B cell (primary cell): ENCODE measurements at regions of chr10 and their contacts with region 1.

Region 1: DNA sequence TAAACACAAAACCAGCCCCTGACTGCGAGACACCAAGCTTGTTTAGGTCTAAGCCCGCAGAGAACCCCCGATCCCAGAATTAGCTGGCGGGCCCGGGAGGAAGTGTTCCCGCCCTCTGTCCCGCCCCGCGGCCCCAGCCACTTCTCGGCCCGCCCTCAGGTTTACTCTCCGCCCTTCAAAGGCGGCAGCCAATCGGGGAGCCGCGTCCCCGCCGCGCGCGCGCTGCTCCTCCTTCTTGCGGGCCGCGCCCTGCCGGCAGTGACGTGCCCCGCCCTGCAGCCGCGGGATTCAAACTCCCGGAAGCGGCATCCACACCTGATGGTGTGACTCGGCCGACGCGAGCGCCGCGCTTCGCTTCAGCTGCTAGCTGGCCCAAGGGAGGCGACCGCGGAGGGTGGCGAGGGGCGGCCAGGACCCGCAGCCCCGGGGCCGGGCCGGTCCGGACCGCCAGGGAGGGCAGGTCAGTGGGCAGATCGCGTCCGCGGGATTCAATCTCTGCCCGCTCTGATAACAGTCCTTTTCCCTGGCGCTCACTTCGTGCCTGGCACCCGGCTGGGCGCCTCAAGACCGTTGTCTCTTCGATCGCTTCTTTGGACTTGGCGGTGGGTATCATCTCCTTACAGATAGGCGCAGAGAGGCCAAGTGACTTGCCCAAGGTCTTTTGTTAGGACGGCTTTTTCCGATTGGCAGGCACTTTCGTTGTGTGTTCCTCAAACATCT is at the start of gene CEP55:
- DNase-seq: peak; percentile 94
- ATAC-seq: peak; percentile 99
- H3K4me3 ChIP-seq: peak within 1 kb of the TSS; percentile 67 to 97 (median 81)
- H3K4me3 Mint-ChIP-seq: peak within 1 kb of the TSS; percentile 93
- H3K27ac ChIP-seq: peak within 1 kb of the TSS in 1 of 2 donors; percentile 44
- H3K27ac Mint-ChIP-seq: peak within 1 kb of the TSS; percentile 67
- H3K4me1 ChIP-seq: peaks cover 8 to 16% of the 10 kb centered on the region in 2 donors
- H3K4me1 Mint-ChIP-seq: peaks cover 15% of the 10 kb centered on the region
- H3K27me3 ChIP-seq: peaks cover 0 to 4% (median 1%) of the 10 kb centered on the region in 4 experiments
- H3K27me3 Mint-ChIP-seq: peaks cover 8% of the 10 kb centered on the region
- CTCF ChIP-seq: no peak
- total RNA-seq, gene CEP55: 0.19 and 0.27 TPM in 2 replicates

Region 2: DNA sequence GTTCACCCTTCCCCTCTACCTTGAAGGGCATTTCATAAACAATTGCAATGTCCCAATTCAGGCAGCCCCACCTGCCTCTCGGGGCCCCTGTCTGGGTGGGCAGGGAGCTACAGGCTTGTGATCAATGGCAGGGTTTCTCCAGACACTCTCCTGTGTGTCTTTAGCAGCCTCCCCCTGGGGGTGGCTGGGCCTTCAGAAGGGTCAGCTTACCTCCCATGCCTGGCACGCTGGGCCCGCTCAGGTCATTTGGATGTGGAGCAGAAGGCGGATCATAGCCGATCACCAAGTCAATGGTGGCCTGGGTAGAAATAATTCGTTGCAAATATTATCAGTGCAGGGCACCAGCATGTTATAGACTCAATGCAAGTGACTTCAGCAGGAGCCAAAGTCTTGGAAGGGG is 70.6 kb before region 1 on chr10:
- CTCF ChIA-PET with region 1: no interaction called
- POLR2A ChIA-PET with region 1: no interaction called
- intact Hi-C with region 1: loop called (anchors 5 kb)
- DNase-seq: no peak
- ATAC-seq: no peak
- H3K4me3 ChIP-seq: no peak overlapping the region
- H3K4me3 Mint-ChIP-seq: peak overlapping the region; percentile 71
- H3K27ac ChIP-seq: no peak overlapping the region
- H3K27ac Mint-ChIP-seq: no peak overlapping the region
- H3K4me1 ChIP-seq: peaks cover 11 to 20% of the 10 kb centered on the region in 2 donors
- H3K4me1 Mint-ChIP-seq: peaks cover 16% of the 10 kb centered on the region
- H3K27me3 ChIP-seq: no peaks in the 10 kb centered on the region
- H3K27me3 Mint-ChIP-seq: no peaks in the 10 kb centered on the region
- CTCF ChIP-seq: no peak